Heart left ventricle (tissue), 16 donors: ENCODE measurements at regions of chr19 and their contacts with region 1.

Region 1: DNA sequence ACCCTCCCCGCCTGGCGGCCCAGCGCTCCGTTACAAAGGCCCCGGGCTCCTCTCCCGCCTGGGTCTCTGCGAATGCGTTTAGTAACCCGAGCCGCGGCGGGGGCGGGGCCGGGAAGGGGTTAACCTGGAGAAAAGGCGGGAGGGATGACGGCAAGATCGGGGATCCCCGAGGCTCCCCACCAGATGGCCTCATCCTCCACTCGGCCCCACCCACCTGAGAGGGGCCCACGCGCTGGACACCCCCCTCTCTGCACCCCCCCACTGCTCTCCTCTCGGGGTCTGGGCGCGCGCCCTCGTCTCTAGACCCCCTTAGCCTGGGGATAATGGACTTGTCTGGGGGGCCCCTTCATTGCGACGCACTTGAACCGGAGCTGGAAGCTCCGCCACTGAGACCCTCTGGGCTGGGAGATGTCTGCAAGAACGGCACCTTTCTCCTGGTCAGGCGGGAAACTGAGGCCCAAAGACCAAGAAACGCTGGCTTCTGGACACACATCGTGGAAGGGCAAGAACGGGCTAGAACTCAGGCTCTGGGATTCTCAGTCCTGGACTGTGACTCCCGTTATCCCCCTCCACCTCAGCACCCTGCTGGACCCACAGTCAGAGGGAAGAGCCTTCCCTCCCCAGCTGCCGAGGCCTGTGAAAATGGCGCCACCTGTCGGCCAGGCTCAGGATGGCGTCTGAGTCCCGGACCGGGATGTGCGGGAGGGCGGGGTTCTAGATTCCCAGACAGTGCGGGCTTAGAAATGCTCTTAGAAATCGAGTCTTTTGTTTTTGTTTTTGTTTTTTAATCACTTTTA is 2.9 kb upstream of the LTBP4 start:
- DNase-seq: peak; percentile 85 to 93 (median 89)
- ATAC-seq: peak; percentile 57 to 74 (median 60)
- H3K4me3 ChIP-seq: peak overlapping the region in 7 of 12 donors; percentile 4 to 96 (median 72)
- H3K27ac ChIP-seq: peak overlapping the region in 6 of 12 donors; percentile 5 to 97 (median 84)
- H3K4me1 ChIP-seq: peaks cover 0 to 67% (median 52%) of the 10 kb centered on the region in 12 donors
- H3K27me3 ChIP-seq: peaks cover 9 to 63% (median 20%) of the 10 kb centered on the region in 9 donors
- CTCF ChIP-seq: peak; percentile 93 to 99 (median 98)
- POLR2A ChIP-seq: no peak

Region 2: DNA sequence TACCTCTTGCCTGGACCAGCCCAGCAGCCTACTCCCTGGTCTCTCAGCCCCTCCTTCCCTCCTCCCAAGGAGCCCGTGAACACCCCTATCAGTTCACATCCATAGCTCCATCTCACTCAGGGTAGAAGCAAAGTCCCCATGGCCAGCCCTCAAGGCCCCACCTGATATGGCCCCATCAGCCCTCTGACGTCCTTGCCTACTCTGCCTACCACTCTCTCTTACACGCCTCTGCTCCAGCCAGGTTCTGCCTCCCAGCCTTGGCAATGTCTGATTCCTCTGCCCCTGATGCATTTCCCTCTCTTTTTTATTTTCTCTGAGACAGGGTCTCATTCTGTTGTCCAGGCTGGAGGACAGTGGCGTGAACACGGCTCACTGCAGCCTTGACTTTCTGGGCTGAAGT is 146.3 kb before region 1 on chr19:
- intact Hi-C with region 1: no loop called
- DNase-seq: no peak
- ATAC-seq: peak in 1 of 4 donors; percentile 40
- H3K4me3 ChIP-seq: no peak overlapping the region
- H3K27ac ChIP-seq: no peak overlapping the region
- H3K4me1 ChIP-seq: no peaks in the 10 kb centered on the region
- H3K27me3 ChIP-seq: no peaks in the 10 kb centered on the region
- CTCF ChIP-seq: no peak
- POLR2A ChIP-seq: no peak

Region 3: GRCh38 chr19:40465557-40466150 is 132.7 kb before region 1 on chr19 and contains the start of gene BLVRB:
- intact Hi-C with region 1: loop called in 5 of 10 experiments (anchors 5 to 10 kb)
- DNase-seq: peak; percentile 99 to 100 (median 99)
- ATAC-seq: peak; percentile 96 to 97 (median 97)
- H3K4me3 ChIP-seq: peak within 1 kb of the TSS; percentile 50 to 85 (median 78)
- H3K27ac ChIP-seq: peak within 1 kb of the TSS; percentile 28 to 96 (median 86)
- H3K4me1 ChIP-seq: peaks cover 0 to 55% (median 19%) of the 10 kb centered on the region in 12 donors
- H3K27me3 ChIP-seq: peaks cover 0 to 12% (median 0%) of the 10 kb centered on the region in 9 donors
- CTCF ChIP-seq: no peak
- POLR2A ChIP-seq: peak; percentile 28 to 90
- total RNA-seq, gene BLVRB: 76.3 to 330 (median 100) TPM

Region 4: GRCh38 chr19:40542202-40542859 is 56.0 kb before region 1 on chr19:
- intact Hi-C with region 1: loop called in 6 of 10 experiments (anchors 2 to 5 kb)
- DNase-seq: peak; percentile 74 to 92 (median 81)
- ATAC-seq: peak; percentile 42 to 85 (median 82)
- H3K4me3 ChIP-seq: no peak overlapping the region
- H3K27ac ChIP-seq: no peak overlapping the region
- H3K4me1 ChIP-seq: peaks cover 0 to 19% (median 7%) of the 10 kb centered on the region in 12 donors
- H3K27me3 ChIP-seq: no peaks in the 10 kb centered on the region
- CTCF ChIP-seq: peak in 1 of 12 donors; percentile 12
- POLR2A ChIP-seq: no peak

Region 5: GRCh38 chr19:40549007-40549708 is 49.2 kb before region 1 on chr19:
- intact Hi-C with region 1: loop called in 5 of 10 experiments (anchors 5 kb)
- DNase-seq: peak; percentile 41 to 80 (median 53)
- ATAC-seq: peak in 3 of 4 donors; percentile 60 to 81 (median 71)
- H3K4me3 ChIP-seq: no peak overlapping the region
- H3K27ac ChIP-seq: no peak overlapping the region
- H3K4me1 ChIP-seq: peaks cover 0 to 4% (median 0%) of the 10 kb centered on the region in 12 donors
- H3K27me3 ChIP-seq: peaks cover 0 to 49% (median 8%) of the 10 kb centered on the region in 9 donors
- CTCF ChIP-seq: peak; percentile 15 to 58 (median 38)
- POLR2A ChIP-seq: no peak

Region 6: DNA sequence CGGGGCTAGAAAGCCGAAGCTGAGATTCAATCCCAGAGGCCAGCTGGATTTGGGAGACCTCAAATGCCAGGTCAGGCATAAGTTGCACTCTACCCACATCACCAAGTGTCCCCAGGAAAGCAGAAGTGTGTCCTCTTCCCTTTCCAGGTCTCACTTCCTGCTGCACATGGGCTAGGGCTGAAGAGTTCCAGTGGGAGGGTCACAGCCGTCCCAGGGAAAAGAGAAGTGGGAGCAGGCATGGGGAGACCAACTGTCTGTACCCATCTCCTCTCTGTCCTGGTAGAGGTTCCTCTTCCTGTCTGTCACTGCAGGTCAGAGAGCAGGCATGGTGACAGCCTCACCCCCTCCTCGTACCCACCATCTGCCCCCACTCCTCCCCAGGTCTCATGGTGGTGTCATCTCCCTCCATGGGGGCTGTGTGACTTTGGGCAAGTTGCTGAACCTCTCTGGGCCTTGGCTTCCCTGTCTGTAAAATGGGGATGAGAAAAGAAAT is 635.5 kb after region 1 on chr19:
- intact Hi-C with region 1: no loop called
- DNase-seq: peak in 3 of 5 donors; percentile 39 to 50 (median 46)
- ATAC-seq: peak; percentile 34 to 80 (median 69)
- H3K4me3 ChIP-seq: no peak overlapping the region
- H3K27ac ChIP-seq: peak overlapping the region in 1 of 12 donors; percentile 75
- H3K4me1 ChIP-seq: peaks cover 0 to 11% (median 0%) of the 10 kb centered on the region in 12 donors
- H3K27me3 ChIP-seq: peaks cover 0 to 7% (median 0%) of the 10 kb centered on the region in 9 donors
- CTCF ChIP-seq: no peak
- POLR2A ChIP-seq: no peak